ENCODE measurements at regions of chr1 and their contacts with region 1.

Region 1: GRCh38 chr1:117758444-117759316 is 152.8 kb downstream of the TENT5C start:
- DNase-seq: peak; percentile 75 to 81
- H3K4me3 ChIP-seq: no peak overlapping the region
- H3K4me3 Mint-ChIP-seq: peak overlapping the region; percentile 55
- H3K27ac Mint-ChIP-seq: peak overlapping the region; percentile 50
- H3K4me1 ChIP-seq: peaks cover 22% of the 10 kb centered on the region
- H3K4me1 Mint-ChIP-seq: peaks cover 34% of the 10 kb centered on the region
- H3K27me3 ChIP-seq: no peaks in the 10 kb centered on the region
- H3K27me3 Mint-ChIP-seq: no peaks in the 10 kb centered on the region
- CTCF ChIP-seq: peak; percentile 51 to 57

Region 2: DNA sequence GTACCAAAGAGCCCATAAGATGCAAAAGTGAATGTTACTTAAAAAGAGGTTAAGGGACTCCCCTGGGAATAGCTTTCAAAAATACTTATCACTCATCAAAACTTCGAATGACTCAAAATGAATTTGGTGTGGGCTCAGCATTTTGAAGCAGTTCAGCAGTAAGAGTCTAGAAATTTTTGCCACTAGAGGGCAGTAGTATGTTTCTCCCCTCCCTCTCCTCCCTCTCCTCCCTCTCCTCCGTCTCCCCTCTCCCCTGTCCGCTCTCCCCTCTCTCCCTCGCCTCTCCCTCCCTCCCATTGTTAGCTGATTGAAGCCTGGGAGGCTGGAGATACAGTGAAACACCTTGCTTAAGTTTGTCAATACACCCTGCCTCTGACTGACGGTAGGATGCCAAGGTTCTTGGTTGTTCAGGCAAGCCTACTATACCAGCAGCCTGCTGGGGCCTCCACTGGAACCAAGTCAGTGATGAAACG is 223.6 kb before region 1 on chr1:
- CTCF ChIA-PET with region 1: interaction called, 6 read pairs
- POLR2A ChIA-PET with region 1: no interaction called
- intact Hi-C with region 1: loop called (anchors 1 kb)
- DNase-seq: peak; percentile 52 to 60
- H3K4me3 ChIP-seq: no peak overlapping the region
- H3K4me3 Mint-ChIP-seq: no peak overlapping the region
- H3K27ac Mint-ChIP-seq: no peak overlapping the region
- H3K4me1 ChIP-seq: no peaks in the 10 kb centered on the region
- H3K4me1 Mint-ChIP-seq: no peaks in the 10 kb centered on the region
- H3K27me3 ChIP-seq: no peaks in the 10 kb centered on the region
- H3K27me3 Mint-ChIP-seq: no peaks in the 10 kb centered on the region
- CTCF ChIP-seq: peak; percentile 28 to 40

Region 3: DNA sequence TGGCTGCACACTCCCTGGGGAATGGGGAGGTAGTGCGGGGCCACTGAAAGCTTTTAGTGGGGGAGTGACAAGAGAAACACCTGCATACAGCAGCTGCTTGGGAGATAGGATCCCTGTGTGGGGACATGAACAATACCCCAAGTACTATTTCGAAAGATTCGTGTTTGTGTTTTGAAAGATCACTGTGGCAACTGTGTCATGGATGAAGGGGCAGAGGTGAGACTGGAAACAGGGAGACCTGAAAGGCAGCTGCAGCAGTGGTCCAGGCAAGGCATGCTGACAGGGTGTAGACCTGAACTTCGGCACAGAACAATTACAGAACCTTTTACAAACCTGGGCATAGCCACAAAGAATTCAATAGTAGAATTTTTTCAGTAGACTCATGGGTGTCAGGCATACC is 119.9 kb before region 1 on chr1:
- CTCF ChIA-PET with region 1: interaction called, 6 read pairs
- POLR2A ChIA-PET with region 1: no interaction called
- intact Hi-C with region 1: loop called (anchors 1 kb)
- DNase-seq: peak in 1 of 2 experiments; percentile 59
- H3K4me3 ChIP-seq: no peak overlapping the region
- H3K4me3 Mint-ChIP-seq: no peak overlapping the region
- H3K27ac Mint-ChIP-seq: no peak overlapping the region
- H3K4me1 ChIP-seq: no peaks in the 10 kb centered on the region; the same call in 1 of the 2 replicates
- H3K4me1 Mint-ChIP-seq: peaks cover 9% of the 10 kb centered on the region
- H3K27me3 ChIP-seq: no peaks in the 10 kb centered on the region
- H3K27me3 Mint-ChIP-seq: no peaks in the 10 kb centered on the region
- CTCF ChIP-seq: no peak

Region 4: DNA sequence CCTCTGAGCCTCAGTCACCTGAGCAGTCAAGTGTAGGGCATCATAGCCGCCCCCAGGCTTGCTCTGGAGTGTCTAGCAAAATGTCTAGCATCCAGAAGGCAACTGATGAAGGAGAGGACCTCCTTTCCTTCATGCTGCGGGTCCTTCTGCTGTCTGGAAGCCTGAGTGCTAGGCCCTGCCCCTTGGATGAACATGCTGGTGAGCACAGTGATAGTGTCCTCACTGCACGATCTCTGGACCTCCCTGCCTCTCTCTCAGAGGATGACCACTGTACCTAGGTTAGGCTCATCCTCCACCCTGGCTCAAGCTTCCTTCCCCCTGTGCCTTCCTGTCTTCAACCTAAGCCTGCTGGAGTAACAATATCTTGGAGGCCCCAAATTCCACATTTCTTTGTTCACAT is 24.3 kb before region 1 on chr1:
- CTCF ChIA-PET with region 1: interaction called, 6 read pairs
- POLR2A ChIA-PET with region 1: no interaction called
- intact Hi-C with region 1: loop called (anchors 1 kb)
- DNase-seq: peak in 1 of 2 experiments; percentile 12
- H3K4me3 ChIP-seq: no peak overlapping the region
- H3K4me3 Mint-ChIP-seq: no peak overlapping the region
- H3K27ac Mint-ChIP-seq: peak overlapping the region; percentile 79
- H3K4me1 ChIP-seq: 0 out of 2 replicates have a peak, but pooled peaks cover 10% of the 10 kb centered on the region
- H3K4me1 Mint-ChIP-seq: peaks cover 17% of the 10 kb centered on the region
- H3K27me3 ChIP-seq: no peaks in the 10 kb centered on the region
- H3K27me3 Mint-ChIP-seq: no peaks in the 10 kb centered on the region
- CTCF ChIP-seq: no peak

Region 5: GRCh38 chr1:118049981-118050380 is 291.3 kb after region 1 on chr1:
- CTCF ChIA-PET with region 1: no interaction called
- POLR2A ChIA-PET with region 1: no interaction called
- intact Hi-C with region 1: no loop called
- DNase-seq: no peak
- H3K4me3 ChIP-seq: no peak overlapping the region
- H3K4me3 Mint-ChIP-seq: no peak overlapping the region
- H3K27ac Mint-ChIP-seq: no peak overlapping the region
- H3K4me1 ChIP-seq: no peaks in the 10 kb centered on the region
- H3K4me1 Mint-ChIP-seq: no peaks in the 10 kb centered on the region
- H3K27me3 ChIP-seq: no peaks in the 10 kb centered on the region
- H3K27me3 Mint-ChIP-seq: peaks cover 6% of the 10 kb centered on the region
- CTCF ChIP-seq: no peak